ENCODE measurements at regions of chr7 and their contacts with region 1.

Region 1: GRCh38 chr7:91089382-91089963 is 174.8 kb upstream of the FZD1 start:
- DNase-seq: no peak
- H3K4me3 Mint-ChIP-seq: no peak overlapping the region
- H3K27ac Mint-ChIP-seq: no peak overlapping the region
- H3K4me1 Mint-ChIP-seq: no peaks in the 10 kb centered on the region
- H3K27me3 Mint-ChIP-seq: peaks cover 2% of the 10 kb centered on the region

Region 2: DNA sequence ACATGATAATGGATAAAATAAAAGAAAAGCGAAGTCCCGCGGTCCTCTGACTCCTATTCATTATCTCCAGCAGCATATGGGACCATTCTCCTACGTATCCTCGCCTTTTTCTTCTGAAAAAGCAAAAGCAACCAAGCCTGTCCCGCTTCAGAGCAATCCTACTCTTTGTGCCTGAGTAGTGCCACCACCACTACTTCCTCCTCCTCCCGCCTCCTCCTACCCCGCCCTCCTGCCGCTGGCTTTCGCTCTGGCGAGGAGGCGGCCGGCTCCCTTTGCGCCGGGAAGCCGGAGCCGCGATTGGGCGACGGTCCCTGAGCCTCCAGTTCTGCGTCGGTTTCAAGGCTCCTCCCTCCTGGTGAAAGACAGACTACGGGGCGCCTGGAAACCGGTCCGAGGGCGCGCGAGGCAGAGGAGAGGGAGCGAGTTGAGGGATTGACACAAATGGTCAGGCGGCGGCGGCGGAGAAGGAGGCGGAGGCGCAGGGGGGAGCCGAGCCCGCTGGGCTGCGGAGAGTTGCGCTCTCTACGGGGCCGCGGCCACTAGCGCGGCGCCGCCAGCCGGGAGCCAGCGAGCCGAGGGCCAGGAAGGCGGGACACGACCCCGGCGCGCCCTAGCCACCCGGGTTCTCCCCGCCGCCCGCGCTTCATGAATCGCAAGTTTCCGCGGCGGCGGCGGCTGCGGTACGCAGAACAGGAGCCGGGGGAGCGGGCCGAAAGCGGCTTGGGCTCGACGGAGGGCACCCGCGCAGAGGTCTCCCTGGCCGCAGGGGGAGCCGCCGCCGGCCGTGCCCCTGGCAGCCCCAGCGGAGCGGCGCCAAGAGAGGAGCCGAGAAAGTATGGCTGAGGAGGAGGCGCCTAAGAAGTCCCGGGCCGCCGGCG is 174.8 kb after region 1 on chr7 and contains the start of gene FZD1:
- intact Hi-C with region 1: loop called (anchors 10 kb)
- DNase-seq: peak; percentile 71
- H3K4me3 Mint-ChIP-seq: peak within 1 kb of the TSS; percentile 89
- H3K27ac Mint-ChIP-seq: peak within 1 kb of the TSS; percentile 76
- H3K4me1 Mint-ChIP-seq: peaks cover 7% of the 10 kb centered on the region
- H3K27me3 Mint-ChIP-seq: peaks cover 50% of the 10 kb centered on the region
- total RNA-seq, gene FZD1: 0.80 and 0.84 TPM in 2 replicates

Region 3: GRCh38 chr7:91411060-91411459 is 321.6 kb after region 1 on chr7:
- intact Hi-C with region 1: loop called (anchors 10 kb)
- DNase-seq: no peak
- H3K4me3 Mint-ChIP-seq: no peak overlapping the region
- H3K27ac Mint-ChIP-seq: no peak overlapping the region
- H3K4me1 Mint-ChIP-seq: no peaks in the 10 kb centered on the region
- H3K27me3 Mint-ChIP-seq: no peaks in the 10 kb centered on the region

Region 4: DNA sequence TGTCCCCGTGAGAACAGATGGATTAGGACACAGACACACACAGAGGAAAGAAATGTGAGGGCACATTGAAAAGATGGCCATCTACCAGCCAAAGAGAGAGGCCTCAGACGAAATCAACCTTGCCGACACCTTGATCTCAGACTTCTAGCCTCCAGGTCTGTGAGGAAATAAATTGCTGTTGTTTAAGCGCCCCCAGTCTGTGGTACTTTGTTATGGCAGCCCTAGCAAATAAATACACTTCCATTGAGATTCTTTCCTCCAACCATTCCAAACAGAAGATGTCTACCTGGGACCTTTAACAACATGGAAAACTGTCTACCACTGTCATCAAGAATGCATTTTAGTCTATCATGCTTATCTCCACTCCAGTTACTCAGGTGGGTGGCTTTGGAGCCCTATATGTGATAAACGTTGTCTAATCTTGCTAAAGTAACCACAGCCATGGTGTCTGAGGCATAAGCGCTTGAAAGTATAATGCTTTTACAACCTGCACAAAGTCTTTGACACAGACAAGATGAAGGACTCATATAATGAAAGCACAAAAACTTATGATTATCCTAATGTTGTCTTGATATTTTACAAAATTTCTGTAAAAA is 546.8 kb after region 1 on chr7:
- intact Hi-C with region 1: loop called (anchors 5 kb)
- DNase-seq: no peak
- H3K4me3 Mint-ChIP-seq: no peak overlapping the region
- H3K27ac Mint-ChIP-seq: no peak overlapping the region
- H3K4me1 Mint-ChIP-seq: no peaks in the 10 kb centered on the region
- H3K27me3 Mint-ChIP-seq: no peaks in the 10 kb centered on the region

Region 5: GRCh38 chr7:91784463-91784862 is 695.0 kb after region 1 on chr7:
- intact Hi-C with region 1: loop called (anchors 10 kb)
- DNase-seq: no peak
- H3K4me3 Mint-ChIP-seq: no peak overlapping the region
- H3K27ac Mint-ChIP-seq: no peak overlapping the region
- H3K4me1 Mint-ChIP-seq: no peaks in the 10 kb centered on the region
- H3K27me3 Mint-ChIP-seq: peaks cover 11% of the 10 kb centered on the region

Measured in activated T-helper 2 cell treated with anti-CD3 and anti-CD28 coated beads, Interferon-gamma antibody, Interleukin-2, Interleukin-4, amounts not matched to agents 10 μg/mL and 5 μg/mL and 100 μg/mL, durations not matched to agents 14 hours and 24 hours and 36 hours (primary cell).